ENCODE measurements at regions of chr3 and their contacts with region 1.

Region 1: GRCh38 chr3:168989396-168989795 is 674.1 kb downstream of the MECOM start:
- DNase-seq: peak; percentile 20
- ATAC-seq: no peak
- H3K4me3 ChIP-seq: no peak overlapping the region
- H3K27ac ChIP-seq: no peak overlapping the region
- H3K4me1 ChIP-seq: 0 out of 2 replicates have a peak, but pooled peaks cover 2% of the 10 kb centered on the region
- H3K27me3 ChIP-seq: no peaks in the 10 kb centered on the region
- CTCF ChIP-seq: no peak
- POLR2A ChIP-seq: no peak
- RAD21 ChIP-seq: no peak

Region 2: GRCh38 chr3:169034401-169034800 is 45.0 kb after region 1 on chr3:
- CTCF ChIA-PET with region 1: no interaction called
- POLR2A ChIA-PET with region 1: no interaction called
- dilution Hi-C with region 1: no loop called
- in situ Hi-C with region 1: no loop called
- intact Hi-C with region 1: loop called (anchors 1 kb)
- DNase-seq: peak; percentile 67
- ATAC-seq: peak; percentile 69
- H3K4me3 ChIP-seq: no peak overlapping the region
- H3K27ac ChIP-seq: no peak overlapping the region
- H3K4me1 ChIP-seq: no peaks in the 10 kb centered on the region
- H3K27me3 ChIP-seq: no peaks in the 10 kb centered on the region
- CTCF ChIP-seq: no peak
- POLR2A ChIP-seq: no peak
- RAD21 ChIP-seq: no peak

Measured in IMR-90 (cell line).